ENCODE measurements at regions of chr20 and their contacts with region 1.

Region 1: GRCh38 chr20:34069341-34070078 is 42.5 kb downstream of the EIF2S2 start:
- DNase-seq: peak; percentile 92
- H3K4me3 ChIP-seq: no peak overlapping the region
- H3K27ac ChIP-seq: peak overlapping the region in 3 of 4 donors; percentile 3 to 59 (median 36)
- H3K4me1 ChIP-seq: peaks cover 0 to 30% (median 22%) of the 10 kb centered on the region in 4 donors
- H3K27me3 ChIP-seq: no peaks in the 10 kb centered on the region
- CTCF ChIP-seq: peak; percentile 79 to 92 (median 85)
- EP300 ChIP-seq: no peak
- POLR2A ChIP-seq: no peak

Region 2: GRCh38 chr20:33862709-33863403 is 206.7 kb before region 1 on chr20:
- intact Hi-C with region 1: loop called (anchors 2 kb)
- DNase-seq: peak; percentile 77
- H3K4me3 ChIP-seq: peak overlapping the region in 3 of 4 donors; percentile 14 to 28 (median 25)
- H3K27ac ChIP-seq: no peak overlapping the region
- H3K4me1 ChIP-seq: peaks cover 0 to 29% (median 20%) of the 10 kb centered on the region in 4 donors
- H3K27me3 ChIP-seq: no peaks in the 10 kb centered on the region
- CTCF ChIP-seq: peak; percentile 21 to 67 (median 62)
- EP300 ChIP-seq: no peak
- POLR2A ChIP-seq: no peak

Region 3: DNA sequence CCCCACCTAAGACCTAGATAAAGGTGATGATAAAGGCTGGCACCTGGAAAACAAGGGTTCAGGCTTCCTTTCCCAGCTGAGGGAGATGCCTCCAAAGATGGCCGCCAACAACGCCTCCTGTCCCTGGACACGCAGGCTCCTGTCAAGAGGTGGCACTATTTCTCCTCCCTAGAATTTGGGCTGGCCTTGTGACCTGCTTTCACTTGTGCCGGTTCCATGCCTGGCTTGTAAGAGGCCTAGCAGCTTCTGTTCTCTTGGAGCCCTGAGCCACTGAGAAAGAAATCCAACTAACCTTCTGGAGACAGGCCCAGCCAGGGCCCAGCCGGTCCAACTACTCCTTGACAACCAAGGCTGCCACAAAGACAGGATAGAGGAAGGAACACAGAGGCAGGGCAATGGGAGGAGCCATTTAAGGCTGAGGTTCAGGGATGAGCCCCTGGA is 136.0 kb before region 1 on chr20:
- intact Hi-C with region 1: loop called (anchors 1 kb)
- DNase-seq: peak; percentile 91
- H3K4me3 ChIP-seq: no peak overlapping the region
- H3K27ac ChIP-seq: peak overlapping the region; percentile 24 to 69 (median 58)
- H3K4me1 ChIP-seq: peaks cover 0 to 10% (median 0%) of the 10 kb centered on the region in 4 donors
- H3K27me3 ChIP-seq: no peaks in the 10 kb centered on the region
- CTCF ChIP-seq: peak; percentile 51 to 68 (median 58)
- EP300 ChIP-seq: no peak
- POLR2A ChIP-seq: no peak

Region 4: DNA sequence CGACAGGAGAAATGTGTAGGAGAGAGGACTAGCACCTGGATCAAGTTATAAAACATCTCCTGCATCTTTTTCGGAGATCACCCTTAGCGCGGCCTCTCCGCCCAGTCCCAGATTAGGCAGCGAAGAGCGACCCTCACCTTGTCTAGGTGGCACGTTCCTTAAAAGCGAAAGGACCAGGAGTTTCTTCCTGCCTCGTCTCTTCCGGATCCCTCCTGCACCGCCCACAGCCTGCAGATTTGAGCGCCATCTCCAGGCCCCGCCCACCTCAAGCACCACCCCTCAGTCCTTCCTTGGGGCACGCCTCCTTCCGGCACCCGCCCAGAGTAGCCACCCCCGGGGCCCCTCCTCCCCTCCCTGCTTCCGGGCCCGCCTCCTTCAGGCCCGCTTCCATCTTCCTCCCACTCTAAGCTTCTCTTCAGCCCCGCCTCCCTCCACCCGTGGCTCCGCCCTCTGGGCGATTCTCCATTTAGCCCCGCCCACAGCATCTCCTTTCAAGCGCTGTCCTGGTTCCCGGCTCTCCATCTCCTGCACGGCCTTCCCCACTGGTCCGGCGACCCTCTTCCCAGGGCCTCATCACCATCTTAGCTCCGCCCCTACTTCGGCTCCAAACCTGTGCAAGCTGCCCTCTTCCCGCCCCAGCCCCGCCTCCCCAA is 76.5 kb before region 1 on chr20:
- intact Hi-C with region 1: loop called (anchors 5 kb)
- DNase-seq: peak; percentile 100
- H3K4me3 ChIP-seq: peak overlapping the region; percentile 67 to 96 (median 91)
- H3K27ac ChIP-seq: peak overlapping the region; percentile 97 to 99 (median 99)
- H3K4me1 ChIP-seq: peaks cover 0 to 50% (median 40%) of the 10 kb centered on the region in 4 donors
- H3K27me3 ChIP-seq: no peaks in the 10 kb centered on the region
- CTCF ChIP-seq: no peak
- EP300 ChIP-seq: no peak
- POLR2A ChIP-seq: peak; percentile 44 to 61

Region 5: DNA sequence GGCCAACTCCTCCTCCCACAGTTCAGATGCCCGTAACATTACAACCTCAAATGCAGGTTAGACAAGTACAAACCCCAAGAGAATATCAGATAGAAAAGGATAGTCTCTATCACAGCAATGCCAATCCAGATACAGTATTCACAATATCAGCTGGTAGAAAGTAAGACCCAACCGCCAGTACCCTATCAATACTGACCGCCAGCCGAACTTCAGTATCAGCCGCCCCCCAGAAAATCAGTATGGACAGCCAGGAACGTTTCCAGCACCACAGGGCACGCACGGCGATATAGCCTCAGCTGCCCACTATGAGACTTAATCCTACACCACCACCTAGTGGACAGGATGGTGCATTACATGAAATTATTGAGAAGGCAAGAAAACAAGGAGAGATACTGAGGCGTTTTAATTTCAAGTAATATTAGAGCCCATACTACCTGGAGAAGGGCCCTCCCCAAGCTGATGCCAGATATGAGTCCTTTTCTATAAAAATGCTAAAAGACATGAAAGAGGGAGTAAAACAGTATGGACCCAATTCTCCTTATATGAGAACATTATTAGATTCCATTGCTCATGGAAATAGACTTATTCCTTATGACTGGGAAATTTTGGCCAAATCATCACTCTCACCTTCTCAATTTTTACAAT is 60.1 kb after region 1 on chr20:
- intact Hi-C with region 1: loop called (anchors 2 kb)
- DNase-seq: peak; percentile 70
- H3K4me3 ChIP-seq: no peak overlapping the region
- H3K27ac ChIP-seq: no peak overlapping the region
- H3K4me1 ChIP-seq: no peaks in the 10 kb centered on the region
- H3K27me3 ChIP-seq: no peaks in the 10 kb centered on the region
- CTCF ChIP-seq: peak; percentile 78 to 82 (median 79)
- EP300 ChIP-seq: no peak
- POLR2A ChIP-seq: no peak

Region 6: DNA sequence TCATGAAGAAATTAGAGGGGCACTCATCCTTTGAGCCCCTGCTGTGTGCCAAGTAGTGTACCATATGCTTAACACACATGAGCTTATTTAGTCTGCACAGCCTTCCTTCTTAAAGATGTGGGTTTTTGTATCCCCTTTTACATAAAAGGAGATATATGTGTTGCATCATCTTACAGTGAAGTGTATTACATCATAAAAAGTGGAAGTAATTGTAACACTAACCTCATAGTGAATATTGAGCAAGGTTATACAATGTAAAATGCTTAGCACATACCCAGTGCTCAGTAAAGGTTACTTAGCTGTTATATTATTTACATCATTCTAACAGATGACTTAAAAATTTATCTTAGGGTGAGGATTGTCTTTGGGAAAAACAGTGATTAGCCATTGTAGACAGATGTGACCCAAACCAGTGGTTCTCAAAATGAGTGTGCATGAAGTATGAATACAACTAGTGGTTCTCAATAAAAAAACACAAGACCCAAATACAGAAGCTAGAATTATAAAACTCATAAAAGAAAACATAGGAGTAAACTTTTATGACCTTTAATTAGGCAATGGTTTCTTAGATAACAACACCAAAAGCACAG is 611.2 kb after region 1 on chr20:
- intact Hi-C with region 1: no loop called
- DNase-seq: no peak
- H3K4me3 ChIP-seq: no peak overlapping the region
- H3K27ac ChIP-seq: no peak overlapping the region
- H3K4me1 ChIP-seq: peaks cover 0 to 15% (median 11%) of the 10 kb centered on the region in 4 donors
- H3K27me3 ChIP-seq: no peaks in the 10 kb centered on the region
- CTCF ChIP-seq: no peak
- EP300 ChIP-seq: no peak
- POLR2A ChIP-seq: no peak

Measured in sigmoid colon (tissue), 7 donors.